PC-3 (cell line): ENCODE measurements at regions of chr4 and their contacts with region 1.

Region 1: GRCh38 chr4:25386926-25387325 is 9.9 kb downstream of the ANAPC4 start:
- DNase-seq: no peak
- ATAC-seq: no peak
- H3K4me3 ChIP-seq: no peak overlapping the region
- H3K27ac ChIP-seq: no peak overlapping the region
- H3K4me1 ChIP-seq: no peaks in the 10 kb centered on the region
- H3K27me3 ChIP-seq: no peaks in the 10 kb centered on the region
- CTCF ChIP-seq: no peak

Region 2: DNA sequence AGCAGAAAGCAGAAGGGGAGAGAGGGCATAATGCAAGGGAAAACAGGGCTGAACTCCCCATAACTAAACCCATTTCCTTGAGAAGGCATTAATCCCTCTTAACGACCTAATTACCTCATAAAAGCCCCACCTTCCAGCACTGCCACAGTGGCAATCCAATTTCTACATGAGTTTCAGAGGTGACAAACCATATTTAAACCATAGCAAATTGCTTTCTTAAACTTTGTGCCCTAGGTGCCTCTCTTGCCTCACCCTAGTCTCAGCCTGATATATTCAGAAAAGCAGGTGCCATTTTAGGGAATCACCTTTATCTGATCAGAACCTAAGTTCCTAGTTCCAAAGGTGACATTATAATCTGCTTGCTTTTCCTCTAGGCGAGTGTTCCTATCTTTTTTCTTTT is 317.6 kb after region 1 on chr4:
- CTCF ChIA-PET with region 1: no interaction called
- POLR2A ChIA-PET with region 1: interaction called, 10 read pairs
- intact Hi-C with region 1: no loop called
- DNase-seq: no peak
- ATAC-seq: no peak
- H3K4me3 ChIP-seq: no peak overlapping the region
- H3K27ac ChIP-seq: no peak overlapping the region
- H3K4me1 ChIP-seq: peaks cover 5% of the 10 kb centered on the region
- H3K27me3 ChIP-seq: no peaks in the 10 kb centered on the region
- CTCF ChIP-seq: no peak